Activated naive CD4-positive, alpha-beta T cell treated with anti-CD3 and anti-CD28 coated beads for 36 hours (primary cell): ENCODE measurements at regions of chr7 and their contacts with region 1.

Region 1: GRCh38 chr7:142478479-142479072 is 220.7 kb upstream of the PRSS58 start:
- DNase-seq: peak; percentile 55
- H3K4me3 Mint-ChIP-seq: no peak overlapping the region
- H3K27ac Mint-ChIP-seq: peak overlapping the region; percentile 21
- H3K4me1 Mint-ChIP-seq: peaks cover 81% of the 10 kb centered on the region
- H3K27me3 Mint-ChIP-seq: no peaks in the 10 kb centered on the region

Region 2: DNA sequence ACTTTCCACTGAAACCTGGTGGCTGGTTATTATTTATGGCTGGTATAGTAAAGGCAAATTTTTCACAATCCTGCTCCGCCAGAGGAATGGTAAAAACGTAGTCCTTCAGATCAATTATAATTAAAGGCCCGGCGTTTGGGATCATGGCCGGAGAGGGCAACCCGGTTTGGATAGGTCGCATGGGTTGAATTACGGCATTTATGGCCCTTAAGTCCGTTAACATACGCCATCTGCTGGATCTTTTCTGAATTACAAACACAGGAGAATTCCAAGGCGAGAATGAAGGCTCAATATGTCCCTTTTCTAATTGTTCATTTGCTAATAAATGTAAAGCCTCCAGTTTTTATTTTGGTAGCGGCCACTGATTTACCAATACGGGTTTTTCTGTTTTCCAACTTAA is 725.9 kb before region 1 on chr7:
- CTCF ChIA-PET with region 1: no interaction called
- intact Hi-C with region 1: no loop called
- DNase-seq: no peak
- H3K4me3 Mint-ChIP-seq: no peak overlapping the region
- H3K27ac Mint-ChIP-seq: no peak overlapping the region
- H3K4me1 Mint-ChIP-seq: no peaks in the 10 kb centered on the region
- H3K27me3 Mint-ChIP-seq: no peaks in the 10 kb centered on the region

Region 3: DNA sequence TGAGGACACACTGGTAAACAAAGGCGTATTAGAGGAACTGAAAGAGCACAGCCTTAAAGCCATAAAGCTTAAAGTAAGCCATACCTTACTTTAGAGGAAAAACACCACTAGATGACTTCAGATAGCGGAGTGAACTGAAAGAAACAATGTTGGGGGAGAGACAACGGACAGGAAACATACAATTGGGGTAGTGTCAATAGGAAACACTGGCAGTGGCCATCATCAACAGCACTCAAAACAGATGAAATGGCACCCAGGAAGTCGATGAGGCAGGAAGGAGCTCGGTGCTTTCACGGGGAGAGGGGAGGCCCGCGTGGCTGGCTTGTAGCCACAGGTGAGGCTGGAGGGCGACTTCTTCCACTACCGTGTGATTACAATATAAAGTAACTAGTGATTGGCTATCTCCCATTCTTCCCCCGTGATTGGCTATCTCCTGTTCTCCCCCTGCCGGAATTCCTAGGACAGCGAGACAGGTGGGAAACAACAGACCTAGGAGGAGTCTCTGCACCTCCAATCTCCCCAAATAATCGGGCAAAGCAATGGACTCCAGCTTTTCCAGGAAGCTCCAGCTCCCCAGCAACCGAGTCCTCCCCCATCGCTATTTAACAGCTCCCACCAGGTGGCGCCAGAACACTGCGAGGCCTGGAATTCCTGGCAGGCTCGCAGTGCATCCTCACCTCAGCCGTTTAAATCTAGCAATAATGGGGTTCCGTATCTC is 502.6 kb before region 1 on chr7:
- CTCF ChIA-PET with region 1: no interaction called
- intact Hi-C with region 1: loop called (anchors 10 kb)
- DNase-seq: peak; percentile 88
- H3K4me3 Mint-ChIP-seq: peak overlapping the region; percentile 76
- H3K27ac Mint-ChIP-seq: peak overlapping the region; percentile 28
- H3K4me1 Mint-ChIP-seq: peaks cover 18% of the 10 kb centered on the region
- H3K27me3 Mint-ChIP-seq: no peaks in the 10 kb centered on the region

Region 4: DNA sequence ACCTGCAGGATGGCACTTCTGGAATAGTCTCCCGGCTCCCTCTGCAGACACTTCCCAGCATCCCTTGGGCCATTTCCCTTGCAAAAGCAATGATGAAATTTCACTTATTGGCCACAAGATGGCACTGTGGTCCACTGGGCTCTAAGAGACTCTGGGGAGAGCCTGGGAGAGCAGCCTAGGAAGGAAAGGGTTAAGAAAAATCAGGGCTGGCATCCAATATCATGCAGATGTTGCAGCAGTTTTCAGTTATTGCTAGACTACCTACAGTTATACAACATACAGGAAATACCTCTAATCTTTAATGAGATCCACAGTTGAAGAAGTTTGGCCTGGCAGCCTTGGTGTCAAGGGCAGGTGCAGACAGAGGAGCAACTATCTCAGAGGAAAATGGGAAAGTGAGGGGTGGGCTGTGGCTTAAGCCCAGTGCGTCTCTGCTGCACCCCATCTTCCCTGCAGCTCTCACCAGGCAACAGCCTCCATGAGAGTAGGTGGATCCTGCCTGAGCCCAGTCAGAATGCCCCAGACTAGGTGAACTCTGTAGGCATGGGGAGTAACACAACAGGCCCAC is 120.5 kb before region 1 on chr7:
- CTCF ChIA-PET with region 1: interaction called, 10 read pairs
- intact Hi-C with region 1: loop called (anchors 2 kb)
- DNase-seq: peak; percentile 59
- H3K4me3 Mint-ChIP-seq: peak overlapping the region; percentile 29
- H3K27ac Mint-ChIP-seq: no peak overlapping the region
- H3K4me1 Mint-ChIP-seq: peaks cover 38% of the 10 kb centered on the region
- H3K27me3 Mint-ChIP-seq: no peaks in the 10 kb centered on the region

Region 5: GRCh38 chr7:142391191-142391992 is 87.2 kb before region 1 on chr7:
- CTCF ChIA-PET with region 1: interaction called, 15 read pairs
- intact Hi-C with region 1: loop called (anchors 1 kb)
- DNase-seq: peak; percentile 72
- H3K4me3 Mint-ChIP-seq: peak overlapping the region; percentile 42
- H3K27ac Mint-ChIP-seq: peak overlapping the region; percentile 2
- H3K4me1 Mint-ChIP-seq: no peaks in the 10 kb centered on the region
- H3K27me3 Mint-ChIP-seq: no peaks in the 10 kb centered on the region

Region 6: GRCh38 chr7:142438235-142438922 is 40.2 kb before region 1 on chr7:
- CTCF ChIA-PET with region 1: interaction called, 11 read pairs
- intact Hi-C with region 1: loop called (anchors 2 kb)
- DNase-seq: peak; percentile 47
- H3K4me3 Mint-ChIP-seq: no peak overlapping the region
- H3K27ac Mint-ChIP-seq: no peak overlapping the region
- H3K4me1 Mint-ChIP-seq: peaks cover 56% of the 10 kb centered on the region
- H3K27me3 Mint-ChIP-seq: no peaks in the 10 kb centered on the region

Region 7: DNA sequence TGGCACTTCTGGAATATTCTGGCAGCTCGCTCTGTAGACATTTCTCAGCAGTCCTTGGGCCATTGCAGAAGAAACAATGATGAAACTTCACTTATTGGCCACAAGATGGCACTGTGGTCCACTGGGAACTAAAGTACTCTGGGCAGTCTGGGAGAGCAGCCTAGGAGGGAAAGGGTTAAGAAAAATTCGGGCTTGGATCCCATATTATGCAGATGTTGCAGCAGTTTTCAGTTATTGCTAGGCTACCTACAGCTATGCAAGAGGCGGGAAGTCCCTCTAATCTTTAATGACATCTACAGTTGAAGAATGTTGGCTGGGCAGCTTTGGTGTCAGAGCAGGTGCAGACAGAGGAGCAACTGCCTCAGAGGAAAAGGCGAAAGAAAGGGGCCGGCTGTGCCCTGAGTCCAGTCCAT is 19.0 kb before region 1 on chr7:
- CTCF ChIA-PET with region 1: interaction called, 361 read pairs
- intact Hi-C with region 1: loop called (anchors 1 kb)
- DNase-seq: peak; percentile 59
- H3K4me3 Mint-ChIP-seq: peak overlapping the region; percentile 16
- H3K27ac Mint-ChIP-seq: peak overlapping the region; percentile 9
- H3K4me1 Mint-ChIP-seq: peaks cover 71% of the 10 kb centered on the region
- H3K27me3 Mint-ChIP-seq: no peaks in the 10 kb centered on the region